Activated CD4-positive, alpha-beta memory T cell treated with anti-CD3 and anti-CD28 coated beads, Interleukin-2, amount 10 ng/mL, durations not matched to agents 7 days and 5 days (primary cell): ENCODE measurements at regions of chr6 and their contacts with region 1.

Region 1: DNA sequence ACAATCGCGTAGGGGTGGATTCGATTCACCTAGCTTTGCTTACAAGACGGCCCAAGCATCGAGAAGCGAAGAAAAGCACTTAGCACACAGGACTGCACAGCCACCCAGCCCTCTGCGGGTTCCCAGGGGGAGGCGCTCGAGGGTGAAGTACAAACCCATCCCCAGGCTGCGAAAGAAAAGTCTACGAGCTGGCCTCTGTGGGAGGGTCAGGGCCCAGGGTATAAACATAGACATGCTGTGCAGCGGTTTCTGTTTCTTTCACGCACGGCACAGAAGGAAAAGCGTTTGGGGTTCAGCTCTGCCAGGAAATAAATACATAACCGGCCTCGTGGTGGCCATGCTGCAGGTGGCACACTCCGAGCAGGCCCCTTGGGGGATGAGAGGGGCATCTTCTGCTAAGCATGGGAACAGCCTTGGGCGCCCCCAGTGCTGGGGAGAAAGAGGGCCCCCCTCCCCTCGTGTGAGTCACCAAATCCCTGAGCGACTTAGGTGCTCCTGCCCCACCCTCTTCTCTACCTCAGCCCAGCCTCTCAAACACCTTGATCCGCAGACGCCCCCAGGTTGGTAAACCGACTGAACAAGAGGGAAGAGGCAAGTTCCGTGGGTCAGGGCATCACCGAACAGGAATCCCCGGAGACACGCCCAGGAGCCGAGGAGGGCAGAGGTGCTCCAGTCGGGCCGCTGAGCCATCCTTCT is 91.6 kb upstream of the RIPOR2 start:
- DNase-seq: peak; percentile 89
- H3K4me3 Mint-ChIP-seq: peak overlapping the region; percentile 67
- H3K27ac Mint-ChIP-seq: peak overlapping the region; percentile 81
- H3K4me1 Mint-ChIP-seq: peaks cover 57% of the 10 kb centered on the region
- H3K27me3 Mint-ChIP-seq: no peaks in the 10 kb centered on the region

Region 2: DNA sequence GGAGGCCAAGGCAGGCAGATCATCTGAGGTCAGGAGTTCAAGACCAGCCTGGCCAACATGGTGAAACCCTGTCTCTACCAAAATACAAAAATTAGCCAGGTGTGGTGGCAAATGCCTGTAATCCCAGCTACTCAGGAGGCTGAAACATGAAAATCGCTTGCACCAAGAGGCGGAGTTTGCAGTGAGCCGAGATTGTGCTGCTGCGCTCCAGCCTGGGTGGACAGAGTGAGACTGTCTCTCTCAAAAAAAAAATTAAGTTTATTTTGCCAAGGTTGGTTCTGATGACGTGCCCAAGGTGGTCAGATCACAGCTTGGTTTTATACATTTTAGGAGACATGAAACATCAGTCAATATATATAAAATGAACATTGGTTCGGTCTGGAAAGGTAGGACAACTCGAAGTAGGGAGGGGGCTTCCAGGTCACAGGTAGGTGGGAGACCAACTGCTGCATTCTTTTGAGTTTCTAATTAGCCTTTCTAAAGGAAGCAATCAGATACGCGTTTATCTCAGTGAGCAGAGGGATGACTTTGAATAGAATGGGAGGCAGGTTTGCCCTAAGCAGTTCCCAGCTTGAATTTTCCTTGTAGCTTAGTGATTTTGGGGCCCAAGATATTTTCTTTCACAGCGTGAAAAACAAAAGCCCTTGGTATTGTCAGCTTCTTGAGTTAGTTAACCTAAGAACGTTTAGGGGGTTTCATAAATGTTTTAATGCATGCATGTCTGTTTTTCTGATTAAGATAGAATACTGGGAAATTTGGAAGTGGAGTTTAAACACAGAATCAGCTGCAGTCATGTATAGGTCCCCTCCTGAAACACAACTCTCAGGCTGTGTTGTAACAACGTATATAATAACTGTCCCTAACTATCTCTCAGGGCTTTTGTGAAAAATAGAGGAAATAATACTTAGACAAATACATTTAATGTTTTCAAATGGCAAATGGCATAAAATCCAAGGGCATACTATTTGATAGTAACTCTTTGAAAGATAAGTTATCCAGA is 343.8 kb before region 1 on chr6:
- CTCF ChIA-PET with region 1: no interaction called
- POLR2A ChIA-PET with region 1: no interaction called
- DNase-seq: no peak
- H3K4me3 Mint-ChIP-seq: no peak overlapping the region
- H3K27ac Mint-ChIP-seq: no peak overlapping the region
- H3K4me1 Mint-ChIP-seq: no peaks in the 10 kb centered on the region
- H3K27me3 Mint-ChIP-seq: no peaks in the 10 kb centered on the region

Region 3: GRCh38 chr6:24774696-24775519 is 252.5 kb before region 1 on chr6 and contains the start of gene GMNN:
- CTCF ChIA-PET with region 1: interaction called, 13 read pairs
- POLR2A ChIA-PET with region 1: interaction called, 16 read pairs
- DNase-seq: peak; percentile 98
- H3K4me3 Mint-ChIP-seq: peak within 1 kb of the TSS; percentile 95
- H3K27ac Mint-ChIP-seq: peak within 1 kb of the TSS; percentile 98
- H3K4me1 Mint-ChIP-seq: peaks cover 32% of the 10 kb centered on the region
- H3K27me3 Mint-ChIP-seq: no peaks in the 10 kb centered on the region
- total RNA-seq, gene GMNN: 67.6 to 69.0 TPM

Region 4: GRCh38 chr6:24910961-24911712 is 116.2 kb before region 1 on chr6:
- CTCF ChIA-PET with region 1: interaction called, 14 read pairs
- POLR2A ChIA-PET with region 1: interaction called, 5 read pairs
- DNase-seq: peak; percentile 46
- H3K4me3 Mint-ChIP-seq: peak overlapping the region; percentile 76
- H3K27ac Mint-ChIP-seq: peak overlapping the region; percentile 79
- H3K4me1 Mint-ChIP-seq: peaks cover 90% of the 10 kb centered on the region
- H3K27me3 Mint-ChIP-seq: no peaks in the 10 kb centered on the region

Region 5: GRCh38 chr6:25006565-25007001 is 20.8 kb before region 1 on chr6:
- CTCF ChIA-PET with region 1: interaction called, 13 read pairs
- POLR2A ChIA-PET with region 1: interaction called, 15 read pairs
- DNase-seq: peak; percentile 75
- H3K4me3 Mint-ChIP-seq: peak overlapping the region; percentile 50
- H3K27ac Mint-ChIP-seq: peak overlapping the region; percentile 92
- H3K4me1 Mint-ChIP-seq: peaks cover 79% of the 10 kb centered on the region
- H3K27me3 Mint-ChIP-seq: no peaks in the 10 kb centered on the region

Region 6: DNA sequence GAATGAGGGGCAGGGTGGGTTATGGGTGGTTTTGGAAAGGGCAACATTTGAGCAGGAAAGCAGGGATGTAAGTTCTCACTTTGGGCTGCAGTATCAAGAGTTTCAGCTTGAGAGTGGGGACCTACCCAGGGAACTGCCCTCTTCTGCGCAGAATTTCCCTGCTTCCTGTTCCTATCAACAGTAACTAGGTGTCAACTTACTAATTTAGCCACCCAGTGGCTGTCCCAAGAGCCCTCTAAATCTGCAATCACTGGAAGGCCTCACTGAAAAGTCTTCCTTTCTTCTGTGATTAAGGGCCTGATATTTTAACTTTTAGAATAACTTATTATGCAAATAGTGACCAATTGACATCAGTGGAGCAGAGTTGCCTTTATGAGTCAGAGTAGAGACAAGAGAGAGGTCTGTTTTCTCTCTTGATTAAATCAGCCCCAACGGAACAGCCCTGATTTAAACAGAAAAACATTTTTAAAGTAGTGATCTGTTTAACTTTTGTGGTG is 26.6 kb after region 1 on chr6:
- CTCF ChIA-PET with region 1: interaction called, 87 read pairs
- POLR2A ChIA-PET with region 1: interaction called, 51 read pairs
- DNase-seq: no peak
- H3K4me3 Mint-ChIP-seq: no peak overlapping the region
- H3K27ac Mint-ChIP-seq: peak overlapping the region; percentile 74
- H3K4me1 Mint-ChIP-seq: peaks cover 86% of the 10 kb centered on the region
- H3K27me3 Mint-ChIP-seq: no peaks in the 10 kb centered on the region

Region 7: GRCh38 chr6:25070547-25071366 is 43.4 kb after region 1 on chr6:
- CTCF ChIA-PET with region 1: interaction called, 196 read pairs
- POLR2A ChIA-PET with region 1: interaction called, 29 read pairs
- DNase-seq: peak; percentile 87
- H3K4me3 Mint-ChIP-seq: no peak overlapping the region
- H3K27ac Mint-ChIP-seq: peak overlapping the region; percentile 81
- H3K4me1 Mint-ChIP-seq: peaks cover 8% of the 10 kb centered on the region
- H3K27me3 Mint-ChIP-seq: peaks cover 2% of the 10 kb centered on the region

Region 8: GRCh38 chr6:25138237-25139125 is 111.1 kb after region 1 on chr6:
- CTCF ChIA-PET with region 1: no interaction called
- POLR2A ChIA-PET with region 1: interaction called, 12 read pairs
- DNase-seq: peak; percentile 81
- H3K4me3 Mint-ChIP-seq: peak overlapping the region; percentile 83
- H3K27ac Mint-ChIP-seq: peak overlapping the region; percentile 96
- H3K4me1 Mint-ChIP-seq: peaks cover 38% of the 10 kb centered on the region
- H3K27me3 Mint-ChIP-seq: no peaks in the 10 kb centered on the region